Caco-2 (cell line): ENCODE measurements at regions of chr11 and their contacts with region 1.

Region 1: DNA sequence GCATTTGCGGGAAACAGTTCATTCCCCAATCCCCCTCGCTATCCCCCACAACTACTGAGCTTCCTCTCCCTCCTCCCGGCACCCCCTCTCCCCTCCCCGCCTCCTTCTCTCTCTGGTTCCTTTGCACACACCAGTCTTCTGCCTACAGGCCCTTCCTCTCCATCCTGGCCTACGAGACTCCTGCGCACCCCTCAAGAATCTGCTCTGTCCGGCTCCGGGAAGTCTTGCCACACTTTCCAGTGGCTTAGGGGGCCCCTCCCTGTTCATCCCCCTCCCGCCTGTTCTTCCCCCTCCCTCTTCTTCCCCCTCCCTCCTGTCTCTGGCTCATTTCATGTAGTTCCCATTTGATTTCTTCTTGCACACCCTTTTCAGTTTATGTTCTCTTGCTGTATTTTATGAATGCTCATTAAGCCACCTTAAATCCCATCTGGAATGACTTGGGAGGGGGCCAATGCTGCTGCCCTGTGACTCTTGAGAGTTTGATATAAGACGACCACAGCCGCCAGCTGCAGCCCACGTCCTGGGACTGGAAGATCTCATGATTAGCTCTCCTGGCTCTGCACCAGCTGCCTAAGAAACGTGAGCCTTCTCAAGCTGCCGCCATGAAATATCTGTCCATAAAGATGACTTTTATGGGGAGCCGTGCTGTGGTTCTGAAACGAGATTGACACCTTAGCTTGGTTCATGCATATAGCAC is 50.9 kb downstream of the RPS6KA4 start:
- DNase-seq: no peak
- H3K4me3 ChIP-seq: no peak overlapping the region
- H3K4me3 Mint-ChIP-seq: no peak overlapping the region
- H3K27ac Mint-ChIP-seq: peak overlapping the region; percentile 76
- H3K4me1 ChIP-seq: peaks cover 48% of the 10 kb centered on the region
- H3K4me1 Mint-ChIP-seq: peaks cover 37% of the 10 kb centered on the region
- H3K27me3 ChIP-seq: no peaks in the 10 kb centered on the region
- H3K27me3 Mint-ChIP-seq: no peaks in the 10 kb centered on the region
- CTCF ChIP-seq: no peak

Region 2: DNA sequence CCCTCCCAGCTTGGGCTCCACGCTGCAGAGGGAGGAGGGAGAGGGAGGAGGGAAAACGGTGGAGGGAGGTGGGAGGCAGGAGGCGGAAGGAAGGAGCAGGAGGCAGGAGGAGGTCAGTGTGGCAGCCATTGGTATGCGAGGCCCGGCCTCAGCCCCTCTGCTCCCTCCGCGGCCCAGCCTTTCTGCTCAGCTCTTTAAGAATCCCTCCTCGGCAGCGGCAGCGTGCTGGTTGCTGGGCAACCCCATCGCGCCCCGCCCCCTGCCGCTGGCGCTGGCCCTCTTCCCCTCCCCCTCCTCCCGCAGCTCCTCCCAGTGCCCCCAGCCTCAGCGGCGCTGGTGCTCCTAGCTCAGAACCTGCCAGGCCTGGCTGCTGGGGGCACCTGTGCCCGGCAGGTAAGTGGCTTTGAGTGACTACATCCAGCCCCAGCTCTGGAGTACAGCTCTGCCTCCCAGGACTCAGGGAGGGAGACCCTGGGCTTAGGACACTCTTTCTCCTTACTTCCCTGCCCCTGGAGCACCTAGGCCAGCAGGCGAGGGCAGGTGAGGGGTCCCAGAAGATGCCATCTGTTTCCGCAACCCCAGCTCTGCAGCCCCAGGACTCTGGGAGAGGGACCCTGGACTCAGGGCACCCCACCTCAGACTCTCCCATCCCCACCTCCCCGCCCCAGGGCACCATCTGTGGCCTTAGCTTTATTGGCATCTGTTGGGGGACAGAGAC is 381.3 kb before region 1 on chr11:
- CTCF ChIA-PET with region 1: no interaction called
- POLR2A ChIA-PET with region 1: no interaction called
- intact Hi-C with region 1: no loop called
- DNase-seq: no peak
- H3K4me3 ChIP-seq: no peak overlapping the region
- H3K4me3 Mint-ChIP-seq: no peak overlapping the region
- H3K27ac Mint-ChIP-seq: no peak overlapping the region
- H3K4me1 ChIP-seq: no peaks in the 10 kb centered on the region
- H3K4me1 Mint-ChIP-seq: no peaks in the 10 kb centered on the region
- H3K27me3 ChIP-seq: no peaks in the 10 kb centered on the region
- H3K27me3 Mint-ChIP-seq: no peaks in the 10 kb centered on the region
- CTCF ChIP-seq: no peak

Region 3: DNA sequence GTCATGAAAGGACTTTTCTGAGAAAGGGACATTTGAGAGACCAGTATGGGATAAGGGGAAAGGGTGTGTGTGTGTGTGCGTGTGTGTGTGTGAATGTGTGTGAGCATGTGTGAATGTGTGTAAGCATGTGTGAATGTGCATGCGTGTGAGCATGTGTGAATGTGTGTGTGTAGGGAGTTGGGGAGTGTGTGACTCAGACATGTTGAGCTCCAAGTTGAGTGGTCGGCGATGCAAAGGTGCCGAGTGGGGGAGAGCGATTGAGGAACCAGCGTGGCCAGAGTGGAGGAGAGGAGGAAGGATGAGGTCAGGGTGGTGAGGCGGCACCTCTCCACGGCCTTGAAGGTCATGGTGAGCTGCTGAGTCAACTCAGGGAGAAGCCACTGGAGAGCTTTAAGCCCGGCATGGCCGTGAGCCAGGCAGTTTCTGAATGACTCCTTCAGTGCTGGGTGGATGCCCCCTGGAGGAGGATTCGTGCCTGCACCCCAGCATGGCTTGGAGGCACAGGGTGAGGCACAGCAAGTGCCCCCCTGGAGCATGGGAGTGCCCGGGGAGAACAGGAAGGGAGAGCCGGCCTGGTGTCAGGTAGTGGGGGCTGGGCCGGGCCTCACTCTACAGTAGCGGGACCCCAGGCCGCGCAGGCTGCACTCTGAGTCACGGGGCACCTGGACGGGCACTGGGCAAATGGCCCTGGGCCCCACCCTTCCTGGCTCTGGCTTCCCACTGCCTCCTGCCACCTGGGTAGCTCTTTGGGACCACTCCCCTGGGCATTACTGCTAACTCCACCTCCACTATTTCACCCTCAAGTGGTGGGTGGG is 78.1 kb before region 1 on chr11:
- CTCF ChIA-PET with region 1: no interaction called
- POLR2A ChIA-PET with region 1: no interaction called
- intact Hi-C with region 1: no loop called
- DNase-seq: peak; percentile 42 to 55
- H3K4me3 ChIP-seq: no peak overlapping the region
- H3K4me3 Mint-ChIP-seq: no peak overlapping the region
- H3K27ac Mint-ChIP-seq: no peak overlapping the region
- H3K4me1 ChIP-seq: peaks cover 5% of the 10 kb centered on the region; the same call in 1 of the 2 replicates
- H3K4me1 Mint-ChIP-seq: peaks cover 12% of the 10 kb centered on the region
- H3K27me3 ChIP-seq: no peaks in the 10 kb centered on the region
- H3K27me3 Mint-ChIP-seq: no peaks in the 10 kb centered on the region
- CTCF ChIP-seq: peak; percentile 17 to 20

Region 4: GRCh38 chr11:64372802-64373597 is 36.9 kb before region 1 on chr11:
- CTCF ChIA-PET with region 1: interaction called, 4 read pairs
- POLR2A ChIA-PET with region 1: no interaction called
- intact Hi-C with region 1: loop called (anchors 1 kb)
- DNase-seq: peak; percentile 94 to 97
- H3K4me3 ChIP-seq: peak overlapping the region; percentile 42
- H3K4me3 Mint-ChIP-seq: peak overlapping the region; percentile 88
- H3K27ac Mint-ChIP-seq: peak overlapping the region; percentile 88
- H3K4me1 ChIP-seq: 0 out of 2 replicates have a peak, but pooled peaks cover 3% of the 10 kb centered on the region
- H3K4me1 Mint-ChIP-seq: peaks cover 7% of the 10 kb centered on the region
- H3K27me3 ChIP-seq: no peaks in the 10 kb centered on the region
- H3K27me3 Mint-ChIP-seq: no peaks in the 10 kb centered on the region
- CTCF ChIP-seq: no peak

Region 5: GRCh38 chr11:64386306-64386702 is 23.6 kb before region 1 on chr11:
- CTCF ChIA-PET with region 1: interaction called, 9 read pairs
- POLR2A ChIA-PET with region 1: interaction called, 7 read pairs
- intact Hi-C with region 1: loop called (anchors 1 kb)
- DNase-seq: peak; percentile 71
- H3K4me3 ChIP-seq: no peak overlapping the region
- H3K4me3 Mint-ChIP-seq: no peak overlapping the region
- H3K27ac Mint-ChIP-seq: peak overlapping the region; percentile 85
- H3K4me1 ChIP-seq: peaks cover 52% of the 10 kb centered on the region
- H3K4me1 Mint-ChIP-seq: peaks cover 41% of the 10 kb centered on the region
- H3K27me3 ChIP-seq: no peaks in the 10 kb centered on the region
- H3K27me3 Mint-ChIP-seq: no peaks in the 10 kb centered on the region
- CTCF ChIP-seq: no peak

Region 6: DNA sequence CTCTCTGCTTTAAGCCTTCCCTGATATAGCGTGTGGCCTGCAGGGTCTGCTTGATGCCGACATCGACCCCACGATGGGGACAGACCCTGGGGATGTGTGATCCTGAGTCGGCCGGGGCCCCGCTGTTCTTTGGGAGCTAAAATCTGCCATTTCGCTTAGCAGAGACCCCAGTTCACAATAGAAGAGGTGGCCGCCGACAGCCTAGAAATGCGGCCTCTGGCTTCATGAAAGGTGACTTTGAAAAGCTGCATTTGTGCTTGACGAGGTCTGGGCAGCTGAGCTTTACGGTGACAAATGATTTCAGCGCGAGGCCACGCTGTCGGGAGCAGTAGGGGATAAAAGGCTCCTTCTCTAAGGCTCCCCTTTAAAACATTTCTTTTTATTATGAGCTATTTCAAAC is 20.8 kb after region 1 on chr11:
- CTCF ChIA-PET with region 1: interaction called, 3 read pairs
- POLR2A ChIA-PET with region 1: interaction called, 4 read pairs
- intact Hi-C with region 1: loop called (anchors 1 kb)
- DNase-seq: no peak
- H3K4me3 ChIP-seq: no peak overlapping the region
- H3K4me3 Mint-ChIP-seq: peak overlapping the region; percentile 37
- H3K27ac Mint-ChIP-seq: peak overlapping the region; percentile 31
- H3K4me1 ChIP-seq: peaks cover 36% of the 10 kb centered on the region
- H3K4me1 Mint-ChIP-seq: peaks cover 23% of the 10 kb centered on the region
- H3K27me3 ChIP-seq: no peaks in the 10 kb centered on the region
- H3K27me3 Mint-ChIP-seq: no peaks in the 10 kb centered on the region
- CTCF ChIP-seq: no peak

Region 7: GRCh38 chr11:64482588-64482987 is 72.7 kb after region 1 on chr11:
- CTCF ChIA-PET with region 1: no interaction called
- POLR2A ChIA-PET with region 1: interaction called, 10 read pairs
- intact Hi-C with region 1: no loop called
- DNase-seq: no peak
- H3K4me3 ChIP-seq: no peak overlapping the region
- H3K4me3 Mint-ChIP-seq: no peak overlapping the region
- H3K27ac Mint-ChIP-seq: no peak overlapping the region
- H3K4me1 ChIP-seq: no peaks in the 10 kb centered on the region
- H3K4me1 Mint-ChIP-seq: no peaks in the 10 kb centered on the region
- H3K27me3 ChIP-seq: no peaks in the 10 kb centered on the region
- H3K27me3 Mint-ChIP-seq: peaks cover 12% of the 10 kb centered on the region
- CTCF ChIP-seq: no peak